ENCODE measurements at regions of chr22 and their contacts with region 1.

Region 1: DNA sequence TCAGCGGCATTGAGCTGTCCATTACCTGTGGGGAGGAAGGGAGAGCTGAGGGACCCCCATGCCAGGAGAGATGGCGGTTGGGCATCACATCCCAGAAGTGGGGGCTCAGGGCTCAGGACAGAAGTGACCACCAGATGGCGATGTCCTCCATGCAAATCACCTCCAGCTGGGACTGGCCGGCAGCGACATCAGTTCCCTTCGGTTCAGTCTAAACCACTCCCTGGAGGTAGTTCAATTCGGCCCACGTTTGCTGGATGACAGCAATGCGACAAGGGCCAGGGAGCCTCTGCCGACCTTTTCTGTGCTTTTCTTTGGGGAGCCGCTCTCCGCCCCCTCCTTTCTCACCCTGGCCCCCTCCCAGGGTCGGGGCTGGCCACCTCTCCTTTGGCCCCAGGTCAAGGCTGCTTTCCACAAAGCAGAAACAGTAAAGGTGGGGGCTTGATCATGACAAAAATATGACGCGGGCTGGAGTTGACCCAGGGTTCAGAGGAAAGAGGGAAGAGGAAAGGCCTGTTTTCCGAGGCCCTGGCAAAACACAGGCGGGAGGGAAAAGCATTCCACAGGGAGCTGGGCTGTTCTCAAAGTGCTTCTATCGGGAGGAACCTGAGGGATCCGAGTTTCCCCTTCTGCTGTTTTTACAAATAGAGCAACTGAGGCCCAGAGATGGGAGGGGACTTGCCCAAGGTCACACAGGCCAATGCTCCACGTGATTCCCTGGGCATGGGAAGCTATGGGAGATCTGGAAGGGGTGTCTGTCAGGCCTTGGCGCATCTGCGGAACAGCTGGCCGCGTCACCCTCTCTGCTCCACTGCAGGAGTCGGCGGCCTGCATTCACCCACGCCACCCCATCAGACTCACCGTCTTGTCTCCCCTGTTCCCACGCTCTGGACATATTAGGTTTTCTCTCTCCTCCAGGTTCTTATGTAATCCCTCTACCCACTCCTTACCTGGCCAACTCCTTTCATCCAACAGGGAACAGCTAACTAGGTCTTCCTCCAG is 54.7 kb downstream of the FBXO7 start:
- DNase-seq: peak; percentile 57
- H3K4me3 ChIP-seq: no peak overlapping the region
- H3K27ac ChIP-seq: no peak overlapping the region
- H3K4me1 ChIP-seq: peaks cover 22% of the 10 kb centered on the region
- H3K27me3 ChIP-seq: no peaks in the 10 kb centered on the region
- CTCF ChIP-seq: peak; percentile 86 to 87

Region 2: GRCh38 chr22:32644252-32645100 is 115.2 kb after region 1 on chr22:
- CTCF ChIA-PET with region 1: no interaction called
- dilution Hi-C with region 1: no loop called
- in situ Hi-C with region 1: no loop called
- intact Hi-C with region 1: loop called (anchors 1 kb)
- DNase-seq: peak; percentile 93
- H3K4me3 ChIP-seq: no peak overlapping the region
- H3K27ac ChIP-seq: peak overlapping the region; percentile 87
- H3K4me1 ChIP-seq: peaks cover 14% of the 10 kb centered on the region
- H3K27me3 ChIP-seq: no peaks in the 10 kb centered on the region
- CTCF ChIP-seq: peak in 1 of 2 donors; percentile 7

Region 3: GRCh38 chr22:32796865-32797573 is 267.7 kb after region 1 on chr22:
- CTCF ChIA-PET with region 1: interaction called, 8 read pairs
- dilution Hi-C with region 1: no loop called
- in situ Hi-C with region 1: loop called (anchors 5 kb)
- intact Hi-C with region 1: loop called (anchors 1 kb)
- DNase-seq: peak; percentile 48
- H3K4me3 ChIP-seq: peak overlapping the region in 1 of 3 experiments; percentile 3
- H3K27ac ChIP-seq: no peak overlapping the region
- H3K4me1 ChIP-seq: peaks cover 11% of the 10 kb centered on the region
- H3K27me3 ChIP-seq: no peaks in the 10 kb centered on the region
- CTCF ChIP-seq: peak; percentile 96

Region 4: GRCh38 chr22:32823024-32823730 is 293.9 kb after region 1 on chr22:
- CTCF ChIA-PET with region 1: no interaction called
- dilution Hi-C with region 1: no loop called
- in situ Hi-C with region 1: no loop called
- intact Hi-C with region 1: loop called (anchors 1 kb)
- DNase-seq: no peak
- H3K4me3 ChIP-seq: no peak overlapping the region
- H3K27ac ChIP-seq: no peak overlapping the region
- H3K4me1 ChIP-seq: peaks cover 29% of the 10 kb centered on the region
- H3K27me3 ChIP-seq: no peaks in the 10 kb centered on the region
- CTCF ChIP-seq: peak; percentile 40 to 44

Region 5: DNA sequence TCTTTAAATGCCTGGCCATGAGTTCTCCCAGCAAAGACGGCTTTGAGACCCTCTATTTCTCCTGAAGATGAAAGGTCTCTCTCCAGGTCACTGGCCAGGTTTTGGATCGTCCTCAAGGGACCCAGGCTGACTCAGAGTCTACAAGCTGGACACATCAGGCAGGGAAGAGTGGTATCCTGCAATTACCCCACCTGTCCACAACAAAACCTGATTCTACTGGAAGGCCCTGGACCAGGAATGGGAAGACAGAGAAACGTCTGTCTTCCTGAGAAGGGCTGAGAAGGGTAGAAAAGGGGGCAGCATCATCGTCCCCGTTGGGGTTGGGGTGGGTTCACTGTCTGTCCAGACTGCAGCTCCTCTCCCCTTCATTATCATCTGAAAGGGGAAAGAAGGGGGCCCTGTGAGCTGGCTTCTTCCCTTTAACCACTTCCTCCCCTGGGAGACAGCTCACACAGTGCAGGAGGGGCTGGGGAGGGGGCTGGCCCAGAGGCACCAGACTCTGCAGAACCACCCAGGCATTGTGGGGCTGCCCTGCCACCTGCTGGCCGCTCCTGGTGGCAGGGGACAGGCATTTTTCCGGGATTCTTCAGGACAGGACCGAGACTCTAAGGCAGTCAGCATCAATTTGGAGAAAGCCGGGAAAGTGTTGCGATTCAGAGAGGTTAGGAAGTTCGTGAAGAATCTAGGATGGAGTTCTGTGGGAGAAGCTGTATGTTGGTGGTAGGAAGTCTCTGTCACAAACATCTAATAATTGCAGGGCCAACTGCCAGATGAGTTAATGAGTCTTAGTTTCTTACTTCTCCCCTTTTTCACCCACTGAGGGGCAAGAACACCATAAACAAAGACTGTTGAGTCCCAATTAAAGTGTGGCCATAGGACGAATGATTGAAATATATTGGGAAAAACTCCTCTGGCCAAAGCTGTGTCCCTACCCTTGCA is 471.3 kb after region 1 on chr22:
- CTCF ChIA-PET with region 1: no interaction called
- dilution Hi-C with region 1: no loop called
- in situ Hi-C with region 1: loop called in 1 of 2 experiments (anchors 5 kb)
- intact Hi-C with region 1: loop called (anchors 1 kb)
- DNase-seq: peak; percentile 44
- H3K4me3 ChIP-seq: no peak overlapping the region
- H3K27ac ChIP-seq: peak overlapping the region; percentile 14
- H3K4me1 ChIP-seq: peaks cover 53% of the 10 kb centered on the region
- H3K27me3 ChIP-seq: no peaks in the 10 kb centered on the region
- CTCF ChIP-seq: peak; percentile 88 to 97

Region 6: GRCh38 chr22:33126881-33127280 is 597.6 kb after region 1 on chr22:
- CTCF ChIA-PET with region 1: no interaction called
- dilution Hi-C with region 1: no loop called
- in situ Hi-C with region 1: no loop called
- intact Hi-C with region 1: loop called (anchors 1 kb)
- DNase-seq: peak; percentile 37
- H3K4me3 ChIP-seq: no peak overlapping the region
- H3K27ac ChIP-seq: no peak overlapping the region
- H3K4me1 ChIP-seq: no peaks in the 10 kb centered on the region
- H3K27me3 ChIP-seq: no peaks in the 10 kb centered on the region
- CTCF ChIP-seq: peak; percentile 49 to 67